Motor neuron (in vitro differentiated cells): ENCODE measurements at regions of chr15 and their contacts with region 1.

Region 1: GRCh38 chr15:78638658-78639314 is 2.2 kb downstream of the CHRNB4 start:
- ATAC-seq: peak; percentile 24 to 77 (median 52)
- H3K4me3 ChIP-seq: no peak overlapping the region
- H3K27ac ChIP-seq: no peak overlapping the region
- H3K4me1 ChIP-seq: peaks cover 28 to 33% of the 10 kb centered on the region in 2 donors

Region 2: GRCh38 chr15:78340231-78341056 is 298.3 kb before region 1 on chr15 and contains the start of gene CRABP1:
- in situ Hi-C with region 1: no loop called
- ATAC-seq: peak in 6 of 8 experiments; percentile 42 to 74 (median 61)
- H3K4me3 ChIP-seq: peak within 1 kb of the TSS; percentile 32 to 60 (median 44)
- H3K27ac ChIP-seq: peak within 1 kb of the TSS; percentile 43 to 66
- H3K4me1 ChIP-seq: peaks cover 42 to 45% of the 10 kb centered on the region in 2 donors
- total RNA-seq, gene CRABP1: 7.7 to 1,434 (median 472) TPM in 7 of 8 experiments, not detected in the other

Region 3: DNA sequence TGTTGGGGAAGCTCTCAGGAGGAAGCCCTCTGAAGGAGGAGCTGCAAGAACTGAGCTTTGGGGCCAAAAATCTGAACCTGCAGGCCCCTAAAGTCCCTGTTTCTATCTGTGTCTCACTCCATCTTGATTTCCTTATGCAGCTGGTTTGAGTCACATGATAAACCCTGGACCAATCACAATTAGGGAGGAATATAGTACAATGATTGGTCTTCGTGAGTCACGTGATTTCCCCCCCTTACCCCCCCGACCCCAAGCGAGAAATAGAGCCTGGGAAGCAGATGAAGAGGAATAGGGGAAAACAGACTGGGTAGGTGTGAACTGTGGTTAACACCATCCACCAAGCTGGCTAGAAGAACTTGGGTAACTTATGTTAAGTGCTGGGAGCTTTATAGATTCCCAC is 285.7 kb before region 1 on chr15:
- in situ Hi-C with region 1: no loop called
- ATAC-seq: peak in 5 of 8 experiments; percentile 65 to 76 (median 73)
- H3K4me3 ChIP-seq: no peak overlapping the region
- H3K27ac ChIP-seq: no peak overlapping the region
- H3K4me1 ChIP-seq: peaks cover 0 to 2% of the 10 kb centered on the region in 2 donors

Region 4: DNA sequence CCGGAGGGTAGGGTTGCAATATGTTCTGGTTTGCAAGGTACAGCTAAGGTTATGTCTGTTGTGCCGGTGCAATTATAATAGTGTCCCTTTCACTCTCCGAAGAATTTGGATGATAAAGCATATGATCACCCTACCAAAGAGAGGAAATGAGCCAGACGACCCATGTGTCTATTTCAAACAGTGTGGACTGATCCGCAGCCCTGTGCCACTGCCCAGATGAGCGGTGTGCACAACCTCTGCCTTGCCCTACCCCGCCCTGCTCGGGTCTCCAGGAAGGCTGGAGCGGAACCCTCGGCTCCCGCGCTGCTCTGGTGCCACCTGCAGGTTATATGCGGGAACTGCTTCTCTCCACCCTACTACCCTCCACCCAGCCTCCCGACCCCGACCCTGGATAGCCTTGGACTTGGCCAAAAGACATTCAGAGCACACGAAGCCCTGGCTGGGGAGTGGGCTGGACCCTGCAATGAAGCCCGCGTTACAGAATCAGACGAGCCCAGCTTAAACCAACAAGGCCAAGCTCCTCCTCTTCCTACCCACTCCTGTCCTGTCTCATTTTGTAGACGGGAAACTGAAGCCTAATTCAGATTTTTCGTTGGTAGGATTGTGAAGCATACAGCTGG is 70.6 kb after region 1 on chr15:
- in situ Hi-C with region 1: loop called in 1 of 9 experiments (anchors 10 kb)
- ATAC-seq: peak; percentile 97 to 100 (median 99)
- H3K4me3 ChIP-seq: no peak overlapping the region
- H3K27ac ChIP-seq: no peak overlapping the region
- H3K4me1 ChIP-seq: peaks cover 0 to 3% of the 10 kb centered on the region in 2 donors

Region 5: DNA sequence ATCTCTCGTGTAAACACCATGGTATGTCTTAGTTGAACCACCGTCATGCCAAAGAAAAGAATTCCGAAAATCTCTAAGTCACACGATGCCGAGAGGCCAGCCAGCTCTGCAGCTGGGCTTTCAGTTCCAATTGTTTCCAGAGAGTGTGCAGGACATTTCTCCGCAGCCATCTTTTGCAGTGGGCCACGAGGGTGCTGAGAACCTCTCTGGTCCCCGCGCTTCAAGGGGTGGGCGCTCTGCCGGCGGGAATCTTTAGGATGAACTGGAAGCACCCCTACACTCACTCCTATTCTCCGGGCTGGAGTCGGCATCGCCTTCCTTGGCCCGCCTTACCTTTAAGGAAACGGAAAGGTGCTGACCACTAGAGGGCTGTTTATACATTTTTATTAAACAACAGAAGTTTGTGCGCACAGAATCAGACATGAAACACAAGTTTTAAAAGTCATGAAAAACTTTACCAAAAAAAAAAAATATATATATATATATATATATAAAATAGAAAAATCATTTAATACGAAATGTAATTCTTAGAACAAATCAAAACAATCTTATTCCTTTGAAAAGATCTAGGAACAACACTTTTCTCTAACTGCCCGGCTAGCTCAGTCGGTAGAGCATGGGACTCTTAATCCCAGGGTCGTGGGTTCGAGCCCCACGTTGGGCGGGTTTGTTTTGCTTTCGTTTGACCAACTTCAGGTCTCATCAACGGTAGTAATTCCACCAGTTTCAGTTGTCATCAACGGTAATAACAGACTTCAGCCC is 221.4 kb after region 1 on chr15:
- in situ Hi-C with region 1: no loop called
- ATAC-seq: peak; percentile 79 to 96 (median 90)
- H3K4me3 ChIP-seq: peak overlapping the region; percentile 25 to 47 (median 39)
- H3K27ac ChIP-seq: peak overlapping the region; percentile 68 to 88
- H3K4me1 ChIP-seq: peaks cover 0 to 4% of the 10 kb centered on the region in 2 donors

Region 6: GRCh38 chr15:79673416-79674123 is 1034.8 kb after region 1 on chr15:
- in situ Hi-C with region 1: no loop called
- ATAC-seq: no peak
- H3K4me3 ChIP-seq: no peak overlapping the region
- H3K27ac ChIP-seq: no peak overlapping the region
- H3K4me1 ChIP-seq: no peaks in the 10 kb centered on the region